Common myeloid progenitor, CD34-positive (primary cell): ENCODE measurements at regions of chr9 and their contacts with region 1.

Region 1: GRCh38 chr9:110183208-110184145 is 24.5 kb downstream of the C9orf152 start:
- DNase-seq: peak; percentile 79 to 86 (median 80)
- H3K4me3 ChIP-seq: no peak overlapping the region
- H3K27ac ChIP-seq: no peak overlapping the region
- H3K4me1 ChIP-seq: peaks cover 0 to 12% (median 7%) of the 10 kb centered on the region in 4 experiments
- H3K27me3 ChIP-seq: no peaks in the 10 kb centered on the region

Region 2: DNA sequence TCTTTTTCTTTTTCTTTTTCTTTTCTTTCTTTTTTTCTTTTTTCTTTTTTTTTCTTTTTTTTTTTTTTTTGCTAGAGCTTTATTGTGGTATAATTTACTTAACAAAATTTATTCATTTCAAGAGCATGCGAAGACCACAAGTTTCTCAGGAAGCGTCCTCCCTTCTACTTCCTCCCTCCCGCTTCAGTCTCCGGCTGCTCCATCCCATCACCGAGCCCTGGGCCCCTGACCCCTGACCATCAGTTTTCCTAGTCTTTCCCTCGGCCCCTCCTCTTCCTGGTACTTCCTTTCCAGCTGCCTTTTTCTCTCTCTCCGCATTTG is 10.2 kb before region 1 on chr9:
- CTCF ChIA-PET with region 1: interaction called, 17 read pairs
- POLR2A ChIA-PET with region 1: no interaction called
- DNase-seq: peak in 1 of 3 donors; percentile 28
- H3K4me3 ChIP-seq: peak overlapping the region in 1 of 7 experiments; percentile 41
- H3K27ac ChIP-seq: no peak overlapping the region
- H3K4me1 ChIP-seq: peaks cover 5 to 21% (median 17%) of the 10 kb centered on the region in 4 experiments
- H3K27me3 ChIP-seq: no peaks in the 10 kb centered on the region

Region 3: DNA sequence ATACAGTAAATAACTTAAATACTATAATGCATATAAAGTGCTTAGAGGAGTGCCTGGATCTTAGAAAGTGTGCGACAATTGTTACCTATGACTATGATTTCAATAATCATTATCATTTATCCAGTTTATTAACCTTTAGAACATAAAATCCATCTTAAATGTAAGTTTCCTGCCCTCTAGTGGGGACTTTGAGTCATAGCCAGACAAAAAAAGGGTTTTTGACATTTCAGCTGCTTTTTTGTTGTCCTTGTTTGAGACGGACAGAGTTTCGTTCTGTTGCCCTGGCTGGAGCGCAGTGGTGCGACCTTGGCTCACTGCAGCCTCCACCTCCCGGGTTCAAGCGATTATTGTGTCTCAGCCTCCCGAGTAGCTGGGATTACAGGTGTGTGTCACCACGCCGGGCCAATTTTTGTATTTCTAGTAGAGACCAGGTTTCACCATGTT is 34.2 kb after region 1 on chr9:
- CTCF ChIA-PET with region 1: interaction called, 134 read pairs
- POLR2A ChIA-PET with region 1: no interaction called
- DNase-seq: peak; percentile 61 to 72 (median 65)
- H3K4me3 ChIP-seq: peak overlapping the region in 1 of 7 experiments; percentile 13
- H3K27ac ChIP-seq: no peak overlapping the region
- H3K4me1 ChIP-seq: peaks cover 0 to 7% (median 4%) of the 10 kb centered on the region in 4 experiments
- H3K27me3 ChIP-seq: no peaks in the 10 kb centered on the region

Region 4: GRCh38 chr9:110623462-110624025 is 440.1 kb after region 1 on chr9:
- CTCF ChIA-PET with region 1: interaction called, 23 read pairs
- POLR2A ChIA-PET with region 1: no interaction called
- DNase-seq: peak; percentile 54 to 64 (median 55)
- H3K4me3 ChIP-seq: no peak overlapping the region
- H3K27ac ChIP-seq: no peak overlapping the region
- H3K4me1 ChIP-seq: no peaks in the 10 kb centered on the region
- H3K27me3 ChIP-seq: no peaks in the 10 kb centered on the region